ENCODE measurements at regions of chr1 and their contacts with region 1.

Region 1: DNA sequence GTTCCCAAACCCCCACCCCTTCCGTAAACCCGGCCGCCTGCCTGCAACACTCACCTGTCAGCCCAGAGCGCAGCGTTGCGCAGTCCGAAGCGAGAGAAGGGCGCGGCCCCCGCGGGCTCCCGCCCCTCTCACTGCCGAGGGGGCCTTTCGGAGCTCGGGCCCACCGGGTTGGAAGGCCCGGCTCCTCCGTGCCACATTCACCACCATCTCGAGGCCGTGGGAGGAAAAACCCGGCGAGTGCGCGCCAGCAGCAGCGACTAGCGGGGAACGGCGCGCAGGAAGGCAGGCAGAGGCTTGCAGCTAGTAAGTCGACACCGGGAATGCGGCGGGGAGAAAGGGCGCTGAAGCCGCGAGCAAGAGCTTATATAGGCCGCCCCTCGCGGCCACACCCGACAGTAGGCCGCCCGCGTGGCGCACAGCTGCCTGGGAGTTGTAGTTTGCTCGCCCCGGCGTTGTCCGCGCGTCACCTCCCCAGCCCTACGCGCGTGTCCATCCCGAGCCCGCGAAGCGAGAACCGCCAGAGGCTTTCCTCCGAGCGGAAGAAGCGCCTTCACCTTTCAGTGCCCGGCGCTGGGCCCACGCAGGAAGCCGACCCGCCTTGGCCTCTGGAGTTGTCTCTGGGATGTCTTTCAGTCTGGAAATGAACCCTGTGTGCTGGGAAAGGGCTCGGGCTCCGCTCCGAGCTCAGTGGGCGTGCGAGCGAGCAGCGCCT is 10.4 kb upstream of the RAB42 start:
- DNase-seq: peak; percentile 93
- H3K4me3 Mint-ChIP-seq: peak overlapping the region; percentile 91
- H3K27ac Mint-ChIP-seq: peak overlapping the region; percentile 92
- H3K4me1 Mint-ChIP-seq: peaks cover 15% of the 10 kb centered on the region
- H3K27me3 Mint-ChIP-seq: no peaks in the 10 kb centered on the region
- CTCF ChIP-seq: no peak

Region 2: DNA sequence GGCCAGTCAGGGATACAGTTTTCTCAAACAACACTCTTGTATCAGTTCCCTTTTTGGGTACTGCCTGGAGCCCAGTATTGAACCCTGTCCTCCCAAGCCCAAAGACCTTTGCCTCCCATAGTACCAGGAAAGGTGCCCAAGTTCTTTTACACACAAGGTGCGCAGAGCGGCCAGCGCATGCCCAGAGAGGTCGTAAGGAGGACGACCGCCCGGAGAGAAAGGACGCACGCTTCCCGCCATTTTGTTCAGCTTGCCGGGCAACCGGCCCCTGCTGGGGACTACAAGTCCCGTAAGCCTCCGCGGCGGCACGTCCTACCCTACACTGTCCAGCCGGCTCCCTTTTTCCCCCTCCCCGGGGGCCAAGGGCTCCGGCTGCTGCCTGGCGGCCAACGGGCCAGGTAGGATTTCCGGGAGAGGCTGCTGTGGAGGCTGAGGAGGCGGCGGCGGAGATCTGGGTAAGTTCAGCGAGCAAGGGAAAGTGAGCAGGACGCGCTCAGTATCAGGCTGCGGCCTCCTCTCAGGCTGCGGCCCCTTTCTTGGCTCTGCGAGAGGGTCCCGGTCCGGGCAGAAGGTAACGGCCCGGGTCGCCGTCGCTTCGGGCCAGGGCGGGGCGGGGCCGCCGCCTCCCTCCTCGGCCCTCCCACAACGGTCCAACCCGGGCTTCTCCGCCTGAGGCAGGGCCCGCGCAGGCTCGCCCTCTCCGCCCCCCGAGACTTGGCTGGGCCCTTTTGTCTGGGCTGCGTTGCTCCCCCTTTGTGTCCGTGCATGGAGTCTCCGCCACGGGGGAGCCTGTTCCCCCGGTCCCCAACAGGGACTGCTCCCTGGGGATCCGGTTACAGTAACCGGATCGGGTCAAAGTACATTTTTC is 212.1 kb before region 1 on chr1 and contains the start of gene PHACTR4:
- CTCF ChIA-PET with region 1: no interaction called
- POLR2A ChIA-PET with region 1: interaction called, 16 read pairs
- intact Hi-C with region 1: no loop called
- DNase-seq: peak; percentile 92
- H3K4me3 Mint-ChIP-seq: peak within 1 kb of the TSS; percentile 91
- H3K27ac Mint-ChIP-seq: peak within 1 kb of the TSS; percentile 76
- H3K4me1 Mint-ChIP-seq: peaks cover 14% of the 10 kb centered on the region
- H3K27me3 Mint-ChIP-seq: no peaks in the 10 kb centered on the region
- CTCF ChIP-seq: no peak
- total RNA-seq, gene PHACTR4: 50.7 and 56.4 TPM in 2 replicates

Region 3: GRCh38 chr1:28518000-28518744 is 63.5 kb before region 1 on chr1:
- CTCF ChIA-PET with region 1: interaction called, 5 read pairs
- POLR2A ChIA-PET with region 1: interaction called, 147 read pairs
- intact Hi-C with region 1: loop called (anchors 1 kb)
- DNase-seq: peak; percentile 89
- H3K4me3 Mint-ChIP-seq: peak overlapping the region; percentile 69
- H3K27ac Mint-ChIP-seq: peak overlapping the region; percentile 75
- H3K4me1 Mint-ChIP-seq: peaks cover 29% of the 10 kb centered on the region
- H3K27me3 Mint-ChIP-seq: no peaks in the 10 kb centered on the region
- CTCF ChIP-seq: peak; percentile 93

Region 4: GRCh38 chr1:28537457-28538199 is 44.1 kb before region 1 on chr1:
- CTCF ChIA-PET with region 1: no interaction called
- POLR2A ChIA-PET with region 1: no interaction called
- intact Hi-C with region 1: no loop called
- DNase-seq: no peak
- H3K4me3 Mint-ChIP-seq: no peak overlapping the region
- H3K27ac Mint-ChIP-seq: no peak overlapping the region
- H3K4me1 Mint-ChIP-seq: no peaks in the 10 kb centered on the region
- H3K27me3 Mint-ChIP-seq: no peaks in the 10 kb centered on the region
- CTCF ChIP-seq: no peak

Region 5: GRCh38 chr1:28591708-28592320 is 10.1 kb after region 1 on chr1 and contains the start of gene RAB42:
- CTCF ChIA-PET with region 1: interaction called, 3 read pairs
- POLR2A ChIA-PET with region 1: interaction called, 64 read pairs
- intact Hi-C with region 1: no loop called
- DNase-seq: no peak
- H3K4me3 Mint-ChIP-seq: no peak within 1 kb of the TSS
- H3K27ac Mint-ChIP-seq: no peak within 1 kb of the TSS
- H3K4me1 Mint-ChIP-seq: peaks cover 12% of the 10 kb centered on the region
- H3K27me3 Mint-ChIP-seq: no peaks in the 10 kb centered on the region
- CTCF ChIP-seq: no peak
- total RNA-seq, gene RAB42: not detected in 2 replicates

Region 6: DNA sequence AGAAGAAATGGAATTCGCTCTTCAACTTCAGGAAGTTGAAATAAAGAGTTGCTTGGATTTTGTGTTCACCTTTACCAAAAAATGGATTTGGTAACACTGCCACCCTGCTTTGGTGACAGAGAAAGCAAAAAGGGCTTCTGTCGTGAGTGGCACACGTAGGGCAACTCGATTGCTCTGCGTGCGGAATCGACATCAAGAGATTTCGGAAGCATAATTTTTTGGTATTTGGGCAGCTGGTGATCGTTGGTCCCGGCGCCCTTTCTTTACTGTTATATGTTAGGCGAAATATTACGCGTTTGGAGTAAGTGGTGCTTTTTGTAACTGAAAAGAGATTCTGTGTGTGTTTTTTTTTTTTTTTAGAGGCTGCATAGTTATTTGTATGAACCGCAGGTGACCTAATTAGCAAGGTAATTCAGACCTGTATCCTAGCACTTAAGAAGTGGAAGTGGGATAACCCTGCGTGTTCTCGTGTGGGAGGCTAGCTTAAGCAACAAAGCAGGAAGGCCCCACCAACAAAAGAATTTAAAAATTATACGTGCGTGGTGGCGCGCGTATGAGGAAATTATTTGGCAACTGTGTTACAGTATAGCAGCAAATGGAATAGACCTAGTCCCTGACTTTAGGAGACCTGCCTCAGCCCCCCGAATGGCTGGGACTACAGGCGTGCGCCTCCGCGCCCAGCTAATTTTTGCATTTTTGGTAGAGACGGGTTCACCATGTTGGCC is 66.9 kb after region 1 on chr1 and contains the start of gene RNU11:
- CTCF ChIA-PET with region 1: interaction called, 4 read pairs
- POLR2A ChIA-PET with region 1: interaction called, 62 read pairs
- intact Hi-C with region 1: no loop called
- DNase-seq: peak; percentile 97
- H3K4me3 Mint-ChIP-seq: peak within 1 kb of the TSS; percentile 77
- H3K27ac Mint-ChIP-seq: peak within 1 kb of the TSS; percentile 100
- H3K4me1 Mint-ChIP-seq: peaks cover 25% of the 10 kb centered on the region
- H3K27me3 Mint-ChIP-seq: no peaks in the 10 kb centered on the region
- CTCF ChIP-seq: no peak
- total RNA-seq, gene RNU11: not detected in 2 replicates

Region 7: GRCh38 chr1:28877132-28877781 is 295.6 kb after region 1 on chr1:
- CTCF ChIA-PET with region 1: no interaction called
- POLR2A ChIA-PET with region 1: no interaction called
- intact Hi-C with region 1: loop called (anchors 5 kb)
- DNase-seq: peak; percentile 85
- H3K4me3 Mint-ChIP-seq: no peak overlapping the region
- H3K27ac Mint-ChIP-seq: no peak overlapping the region
- H3K4me1 Mint-ChIP-seq: peaks cover 4% of the 10 kb centered on the region
- H3K27me3 Mint-ChIP-seq: no peaks in the 10 kb centered on the region
- CTCF ChIP-seq: peak; percentile 91